ENCODE measurements at regions of chr10 and their contacts with region 1.

Region 1: GRCh38 chr10:4333459-4333894 is 492.5 kb upstream of the AKR1E2 start:
- DNase-seq: no peak
- ATAC-seq: peak; percentile 28
- H3K4me3 Mint-ChIP-seq: no peak overlapping the region
- H3K27ac Mint-ChIP-seq: no peak overlapping the region
- H3K4me1 Mint-ChIP-seq: no peaks in the 10 kb centered on the region
- H3K27me3 Mint-ChIP-seq: no peaks in the 10 kb centered on the region
- CTCF ChIP-seq: no peak

Region 2: DNA sequence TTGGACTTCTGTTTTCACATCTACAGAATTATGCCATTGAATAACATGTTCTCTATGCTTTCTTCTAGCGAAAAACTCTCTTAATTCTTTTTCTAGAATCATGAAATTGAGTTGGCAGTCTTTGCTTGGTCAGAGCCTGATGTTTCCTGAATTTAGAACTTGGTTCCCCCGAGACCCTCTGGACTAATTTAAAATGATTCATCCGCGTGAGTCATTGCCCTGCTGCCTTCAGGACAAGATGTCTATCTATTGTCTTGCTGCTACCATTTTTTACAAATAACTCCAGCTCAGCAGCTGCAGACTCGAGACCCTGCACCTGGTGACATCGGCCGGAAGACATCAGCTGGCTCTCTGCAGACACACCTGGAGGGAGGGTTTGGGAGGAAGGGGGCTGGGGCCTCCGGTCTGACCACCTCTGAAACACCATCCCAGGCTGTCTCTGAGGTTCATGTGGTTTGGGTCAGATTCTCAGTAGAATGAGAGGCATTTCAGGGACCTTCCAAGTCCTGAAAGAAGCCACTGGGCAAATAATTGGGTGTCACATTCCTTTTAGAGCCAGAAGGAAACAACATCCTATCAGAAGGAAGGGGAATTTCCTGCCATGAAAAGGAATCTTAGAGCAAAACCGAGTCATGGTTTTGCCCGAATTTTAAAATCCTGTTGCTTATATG is 527.6 kb before region 1 on chr10:
- CTCF ChIA-PET with region 1: no interaction called
- POLR2A ChIA-PET with region 1: no interaction called
- intact Hi-C with region 1: loop called (anchors 2 kb)
- DNase-seq: peak; percentile 47
- ATAC-seq: peak; percentile 69
- H3K4me3 Mint-ChIP-seq: peak overlapping the region; percentile 73
- H3K27ac Mint-ChIP-seq: peak overlapping the region; percentile 92
- H3K4me1 Mint-ChIP-seq: peaks cover 69% of the 10 kb centered on the region
- H3K27me3 Mint-ChIP-seq: no peaks in the 10 kb centered on the region
- CTCF ChIP-seq: no peak

Region 3: GRCh38 chr10:4260483-4261124 is 72.9 kb before region 1 on chr10:
- CTCF ChIA-PET with region 1: no interaction called
- POLR2A ChIA-PET with region 1: no interaction called
- intact Hi-C with region 1: no loop called
- DNase-seq: no peak
- ATAC-seq: no peak
- H3K4me3 Mint-ChIP-seq: no peak overlapping the region
- H3K27ac Mint-ChIP-seq: no peak overlapping the region
- H3K4me1 Mint-ChIP-seq: peaks cover under 1% of the 10 kb centered on the region
- H3K27me3 Mint-ChIP-seq: peaks cover 2% of the 10 kb centered on the region
- CTCF ChIP-seq: no peak

Region 4: DNA sequence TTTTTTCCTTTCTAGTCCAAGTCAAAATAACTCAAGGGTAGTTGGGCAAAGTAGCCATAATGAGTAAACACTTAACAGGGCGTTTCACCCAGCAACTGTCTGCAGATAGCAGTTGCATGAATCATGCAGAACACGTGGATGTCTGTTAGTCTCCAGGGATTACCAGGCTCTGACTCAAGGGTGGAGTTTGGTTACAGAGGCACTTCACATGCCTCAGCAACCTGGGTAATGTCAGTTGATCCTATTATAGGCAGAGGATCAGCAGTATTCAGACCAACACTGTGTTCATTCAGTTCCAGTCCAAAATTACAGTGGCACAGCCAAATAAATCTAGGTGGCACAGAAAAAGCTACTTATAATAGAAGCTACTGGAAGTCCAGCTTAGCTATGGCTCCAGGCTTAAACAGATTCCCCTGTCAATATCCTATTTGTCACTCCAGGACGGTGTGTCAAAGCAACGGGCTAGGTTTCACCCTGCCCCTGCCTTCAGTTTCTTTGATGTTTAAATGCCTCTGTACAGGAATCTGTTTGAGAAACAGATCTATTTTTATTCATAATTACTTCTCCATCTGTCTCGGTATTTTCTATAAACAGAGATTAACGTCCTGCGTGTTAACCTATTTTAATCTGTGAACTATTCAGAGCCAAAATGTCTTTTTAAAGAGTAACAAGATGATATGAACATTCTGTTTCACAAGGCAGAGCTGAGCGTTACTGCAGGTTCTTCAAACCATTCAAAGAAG is 329.9 kb after region 1 on chr10:
- CTCF ChIA-PET with region 1: no interaction called
- POLR2A ChIA-PET with region 1: no interaction called
- intact Hi-C with region 1: loop called (anchors 2 kb)
- DNase-seq: peak; percentile 27
- ATAC-seq: peak; percentile 100
- H3K4me3 Mint-ChIP-seq: peak overlapping the region; percentile 50
- H3K27ac Mint-ChIP-seq: peak overlapping the region; percentile 36
- H3K4me1 Mint-ChIP-seq: peaks cover 20% of the 10 kb centered on the region
- H3K27me3 Mint-ChIP-seq: peaks cover 2% of the 10 kb centered on the region
- CTCF ChIP-seq: no peak

Measured in activated B cell treated with CpG ODN at 0.5 μM for 24 hours (primary cell).